Caco-2 (cell line): ENCODE measurements at regions of chr1 and their contacts with region 1.

Region 1: GRCh38 chr1:25848531-25848930 is 10.7 kb downstream of the AUNIP start:
- DNase-seq: peak in 1 of 2 experiments; percentile 30
- H3K4me3 ChIP-seq: no peak overlapping the region
- H3K4me3 Mint-ChIP-seq: no peak overlapping the region
- H3K27ac Mint-ChIP-seq: peak overlapping the region; percentile 46
- H3K4me1 ChIP-seq: peaks cover 10% of the 10 kb centered on the region
- H3K4me1 Mint-ChIP-seq: peaks cover 18% of the 10 kb centered on the region
- H3K27me3 ChIP-seq: no peaks in the 10 kb centered on the region
- H3K27me3 Mint-ChIP-seq: no peaks in the 10 kb centered on the region
- CTCF ChIP-seq: no peak

Region 2: GRCh38 chr1:25727635-25728330 is 120.7 kb before region 1 on chr1:
- CTCF ChIA-PET with region 1: no interaction called
- POLR2A ChIA-PET with region 1: no interaction called
- intact Hi-C with region 1: no loop called
- DNase-seq: no peak
- H3K4me3 ChIP-seq: no peak overlapping the region
- H3K4me3 Mint-ChIP-seq: no peak overlapping the region
- H3K27ac Mint-ChIP-seq: peak overlapping the region; percentile 51
- H3K4me1 ChIP-seq: peaks cover 26% of the 10 kb centered on the region
- H3K4me1 Mint-ChIP-seq: peaks cover 6% of the 10 kb centered on the region
- H3K27me3 ChIP-seq: no peaks in the 10 kb centered on the region
- H3K27me3 Mint-ChIP-seq: no peaks in the 10 kb centered on the region
- CTCF ChIP-seq: no peak

Region 3: DNA sequence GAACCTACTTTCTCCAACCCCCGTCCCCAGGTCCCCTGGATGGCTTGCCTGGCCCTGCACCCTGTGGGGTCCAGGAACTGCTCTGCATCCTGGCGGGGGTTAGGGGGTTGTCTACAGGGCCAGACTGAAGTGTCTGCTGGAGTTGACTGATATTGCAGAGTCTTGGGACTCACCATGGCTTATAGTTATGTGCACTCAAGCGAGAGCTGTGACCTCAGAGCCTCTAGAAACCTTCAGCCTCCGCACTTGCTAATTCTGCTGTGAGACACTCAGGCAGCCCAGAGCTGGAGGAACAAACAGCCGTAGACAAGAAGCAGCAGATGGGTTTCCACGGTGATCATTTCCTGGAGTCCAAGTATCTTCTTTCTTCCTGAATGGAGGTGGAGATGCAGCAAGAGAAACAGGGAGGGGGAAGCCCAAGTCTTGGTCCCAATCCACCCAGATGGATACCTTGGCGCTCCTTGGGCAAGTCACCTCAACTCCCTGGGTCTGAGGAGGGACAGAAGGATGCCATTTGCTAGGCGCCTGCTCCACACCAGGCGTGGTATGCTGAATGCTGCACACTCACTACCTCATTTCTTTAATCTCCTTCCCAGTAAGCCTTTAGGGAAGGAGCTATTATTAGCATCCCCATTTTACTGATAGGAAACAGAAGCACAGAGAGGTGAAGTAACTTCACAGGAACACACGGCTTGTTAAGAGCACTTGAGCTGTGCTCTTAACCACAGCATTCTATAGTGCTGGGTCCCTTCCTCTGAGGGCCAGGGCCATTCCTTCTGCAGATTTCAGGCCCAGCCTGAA is 168.1 kb after region 1 on chr1:
- CTCF ChIA-PET with region 1: interaction called, 17 read pairs
- POLR2A ChIA-PET with region 1: no interaction called
- intact Hi-C with region 1: no loop called
- DNase-seq: no peak
- H3K4me3 ChIP-seq: no peak overlapping the region
- H3K4me3 Mint-ChIP-seq: no peak overlapping the region
- H3K27ac Mint-ChIP-seq: no peak overlapping the region
- H3K4me1 ChIP-seq: no peaks in the 10 kb centered on the region
- H3K4me1 Mint-ChIP-seq: peaks cover 4% of the 10 kb centered on the region
- H3K27me3 ChIP-seq: no peaks in the 10 kb centered on the region
- H3K27me3 Mint-ChIP-seq: no peaks in the 10 kb centered on the region
- CTCF ChIP-seq: no peak

Region 4: GRCh38 chr1:26112407-26112775 is 263.9 kb after region 1 on chr1:
- CTCF ChIA-PET with region 1: no interaction called
- POLR2A ChIA-PET with region 1: no interaction called
- intact Hi-C with region 1: no loop called
- DNase-seq: no peak
- H3K4me3 ChIP-seq: peak overlapping the region; percentile 97
- H3K4me3 Mint-ChIP-seq: peak overlapping the region; percentile 90
- H3K27ac Mint-ChIP-seq: peak overlapping the region; percentile 76
- H3K4me1 ChIP-seq: no peaks in the 10 kb centered on the region; the same call in 1 of the 2 replicates
- H3K4me1 Mint-ChIP-seq: no peaks in the 10 kb centered on the region
- H3K27me3 ChIP-seq: no peaks in the 10 kb centered on the region
- H3K27me3 Mint-ChIP-seq: no peaks in the 10 kb centered on the region
- CTCF ChIP-seq: no peak